Body of pancreas (tissue), 4 donors: ENCODE measurements at regions of chr6 and their contacts with region 1.

Region 1: GRCh38 chr6:122839477-122839876 is 50.4 kb downstream of the SMPDL3A start:
- DNase-seq: peak; percentile 62 to 70 (median 69)
- ATAC-seq: peak; percentile 84
- H3K4me3 ChIP-seq: no peak overlapping the region
- H3K27ac ChIP-seq: no peak overlapping the region
- H3K4me1 ChIP-seq: no peaks in the 10 kb centered on the region
- H3K27me3 ChIP-seq: no peaks in the 10 kb centered on the region
- CTCF ChIP-seq: peak; percentile 50 to 84 (median 80)
- POLR2A ChIP-seq: no peak

Region 2: DNA sequence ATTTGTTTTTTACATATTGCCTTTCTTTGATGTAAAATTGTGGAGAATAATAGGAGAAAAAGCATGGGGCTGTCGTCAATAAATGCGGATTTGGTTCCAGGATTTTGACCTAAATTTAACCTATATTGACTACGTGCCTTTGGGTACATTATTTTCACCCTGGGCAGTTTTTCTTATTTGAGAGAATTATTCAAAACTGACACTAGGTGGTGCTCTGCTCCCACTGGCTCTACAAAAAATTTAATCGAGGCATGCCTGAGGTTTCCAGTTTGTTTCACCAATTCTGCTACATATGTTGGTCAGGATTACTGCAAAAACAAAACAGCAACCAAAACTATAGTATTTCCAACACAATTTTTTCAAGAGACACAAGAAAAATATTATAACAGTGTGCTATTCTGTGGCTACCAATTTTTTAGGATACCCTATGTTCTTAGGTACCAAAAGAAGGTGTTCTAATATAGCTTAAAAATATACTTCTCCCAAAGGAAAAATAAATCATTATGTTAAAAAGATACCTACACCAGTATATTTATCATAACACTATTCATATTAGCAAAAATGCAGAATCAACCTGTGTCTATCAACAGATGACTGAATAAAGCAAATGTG is 108.6 kb before region 1 on chr6:
- intact Hi-C with region 1: loop called (anchors 5 kb)
- DNase-seq: peak in 2 of 4 donors; percentile 11 to 23
- ATAC-seq: peak; percentile 52
- H3K4me3 ChIP-seq: no peak overlapping the region
- H3K27ac ChIP-seq: no peak overlapping the region
- H3K4me1 ChIP-seq: no peaks in the 10 kb centered on the region
- H3K27me3 ChIP-seq: no peaks in the 10 kb centered on the region
- CTCF ChIP-seq: peak; percentile 63 to 88 (median 79)
- POLR2A ChIP-seq: no peak